ENCODE measurements at regions of chr17 and their contacts with region 1.

Region 1: GRCh38 chr17:78559749-78560368 is 17.3 kb downstream of the DNAH17 start:
- DNase-seq: no peak
- H3K4me3 ChIP-seq: no peak overlapping the region
- H3K27ac ChIP-seq: no peak overlapping the region
- H3K4me1 ChIP-seq: no peaks in the 10 kb centered on the region
- H3K27me3 ChIP-seq: peaks cover 19% of the 10 kb centered on the region
- CTCF ChIP-seq: peak in 1 of 5 experiments; percentile 22
- EP300 ChIP-seq: no peak
- POLR2A ChIP-seq: no peak

Region 2: GRCh38 chr17:78272181-78272913 is 287.5 kb before region 1 on chr17:
- in situ Hi-C with region 1: no loop called
- intact Hi-C with region 1: no loop called
- DNase-seq: peak; percentile 83
- H3K4me3 ChIP-seq: no peak overlapping the region
- H3K27ac ChIP-seq: peak overlapping the region in 1 of 4 donors; percentile 37
- H3K4me1 ChIP-seq: peaks cover 0 to 20% (median 5%) of the 10 kb centered on the region in 4 donors
- H3K27me3 ChIP-seq: peaks cover 26% of the 10 kb centered on the region
- CTCF ChIP-seq: no peak
- EP300 ChIP-seq: no peak
- POLR2A ChIP-seq: no peak

Region 3: GRCh38 chr17:78645421-78646295 is 85.8 kb after region 1 on chr17:
- in situ Hi-C with region 1: no loop called
- intact Hi-C with region 1: loop called (anchors 10 kb)
- DNase-seq: peak; percentile 81
- H3K4me3 ChIP-seq: no peak overlapping the region
- H3K27ac ChIP-seq: peak overlapping the region in 2 of 4 donors; percentile 45 to 51
- H3K4me1 ChIP-seq: no peaks in the 10 kb centered on the region
- H3K27me3 ChIP-seq: peaks cover 14% of the 10 kb centered on the region
- CTCF ChIP-seq: no peak
- EP300 ChIP-seq: no peak
- POLR2A ChIP-seq: no peak

Region 4: DNA sequence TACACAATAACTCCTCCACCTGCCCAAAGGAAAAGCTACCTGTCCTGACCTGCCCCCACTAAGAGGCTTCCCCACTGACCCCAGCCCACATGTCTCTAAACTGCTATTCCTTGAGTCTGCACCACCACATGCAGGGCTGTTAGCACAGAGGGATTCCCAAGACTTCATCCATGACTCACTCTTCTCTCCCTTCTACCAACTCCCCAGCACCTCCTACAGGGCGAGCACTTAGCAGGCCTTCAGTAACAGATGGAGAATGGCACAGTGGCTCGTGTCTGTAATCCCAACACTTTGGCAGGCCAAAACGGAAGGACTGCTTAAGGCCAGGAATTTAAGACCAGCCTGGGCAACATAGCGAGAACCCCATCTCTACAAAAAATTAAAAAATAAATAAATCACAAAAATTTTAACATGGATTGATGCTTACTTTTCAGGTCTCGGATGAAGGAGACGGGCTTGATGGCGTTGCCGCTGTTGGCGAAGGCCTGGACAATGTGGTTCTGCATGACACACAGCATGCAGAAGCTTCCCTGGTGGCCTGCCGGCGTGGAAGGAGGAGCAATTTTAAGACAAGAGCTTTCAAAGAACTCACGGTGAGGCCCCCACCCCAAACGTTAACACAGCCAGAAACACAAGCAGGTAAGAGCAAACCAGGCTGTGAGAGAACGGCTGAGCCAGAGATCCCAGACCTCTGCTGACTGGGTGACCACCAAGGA is 268.8 kb after region 1 on chr17:
- in situ Hi-C with region 1: no loop called
- intact Hi-C with region 1: no loop called
- DNase-seq: no peak
- H3K4me3 ChIP-seq: no peak overlapping the region
- H3K27ac ChIP-seq: no peak overlapping the region
- H3K4me1 ChIP-seq: no peaks in the 10 kb centered on the region
- H3K27me3 ChIP-seq: no peaks in the 10 kb centered on the region
- CTCF ChIP-seq: no peak
- EP300 ChIP-seq: no peak
- POLR2A ChIP-seq: no peak

Region 5: DNA sequence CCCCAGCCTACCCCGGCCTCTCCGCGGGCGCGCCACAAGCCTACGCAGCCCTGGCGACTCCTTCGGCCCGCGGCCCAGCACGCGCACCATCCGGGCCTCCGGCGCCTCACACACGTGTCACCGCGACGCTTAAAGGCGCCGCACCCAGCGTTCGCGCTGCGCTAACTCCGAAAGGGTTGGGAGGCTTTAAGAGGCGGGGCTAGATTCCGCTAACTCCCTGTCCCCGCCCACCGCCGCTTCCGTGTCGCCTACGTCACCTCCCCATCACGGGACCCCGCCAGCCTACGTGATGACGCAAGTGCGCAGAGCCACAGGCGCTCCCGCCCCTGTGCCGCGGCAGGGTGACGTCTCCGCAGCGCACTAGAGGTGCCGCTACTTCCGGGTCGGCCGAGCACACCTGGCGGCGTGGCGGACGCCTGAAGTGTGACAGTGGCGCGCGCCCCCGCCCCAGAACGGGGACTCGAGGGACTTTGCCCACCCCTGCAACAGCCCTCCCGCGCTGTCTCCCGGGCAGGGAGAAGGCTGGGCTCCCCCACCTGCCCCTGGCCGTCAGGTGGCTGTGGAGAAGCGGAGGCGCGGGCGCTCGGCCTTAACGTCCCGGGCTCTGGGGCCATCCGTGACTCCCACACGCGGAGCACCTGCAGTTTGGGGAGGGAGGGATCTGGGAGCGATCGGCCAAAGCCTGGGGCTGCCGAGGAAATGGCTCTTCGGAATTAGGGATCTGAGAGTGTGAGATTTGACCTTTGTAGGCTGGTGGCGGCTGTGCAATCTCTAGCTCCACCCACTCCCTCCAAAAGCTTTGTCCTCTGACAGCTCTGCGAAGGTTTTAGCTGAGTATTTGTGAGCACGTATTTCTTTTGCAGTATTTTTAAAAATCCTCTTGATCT is 281.1 kb after region 1 on chr17 and contains the start of gene USP36:
- in situ Hi-C with region 1: no loop called
- intact Hi-C with region 1: no loop called
- DNase-seq: peak; percentile 100
- H3K4me3 ChIP-seq: peak within 1 kb of the TSS; percentile 52 to 97 (median 81)
- H3K27ac ChIP-seq: peak within 1 kb of the TSS; percentile 96 to 100 (median 98)
- H3K4me1 ChIP-seq: peaks cover 16 to 24% (median 20%) of the 10 kb centered on the region in 4 donors
- H3K27me3 ChIP-seq: no peaks in the 10 kb centered on the region
- CTCF ChIP-seq: peak; percentile 5 to 47 (median 11)
- EP300 ChIP-seq: peak; percentile 95
- POLR2A ChIP-seq: peak; percentile 99
- total RNA-seq, gene USP36: 28.5 to 96.5 (median 63.5) TPM